Cardiac septum (tissue), 1 donor: ENCODE measurements at regions of chr1 and their contacts with region 1.

Region 1: DNA sequence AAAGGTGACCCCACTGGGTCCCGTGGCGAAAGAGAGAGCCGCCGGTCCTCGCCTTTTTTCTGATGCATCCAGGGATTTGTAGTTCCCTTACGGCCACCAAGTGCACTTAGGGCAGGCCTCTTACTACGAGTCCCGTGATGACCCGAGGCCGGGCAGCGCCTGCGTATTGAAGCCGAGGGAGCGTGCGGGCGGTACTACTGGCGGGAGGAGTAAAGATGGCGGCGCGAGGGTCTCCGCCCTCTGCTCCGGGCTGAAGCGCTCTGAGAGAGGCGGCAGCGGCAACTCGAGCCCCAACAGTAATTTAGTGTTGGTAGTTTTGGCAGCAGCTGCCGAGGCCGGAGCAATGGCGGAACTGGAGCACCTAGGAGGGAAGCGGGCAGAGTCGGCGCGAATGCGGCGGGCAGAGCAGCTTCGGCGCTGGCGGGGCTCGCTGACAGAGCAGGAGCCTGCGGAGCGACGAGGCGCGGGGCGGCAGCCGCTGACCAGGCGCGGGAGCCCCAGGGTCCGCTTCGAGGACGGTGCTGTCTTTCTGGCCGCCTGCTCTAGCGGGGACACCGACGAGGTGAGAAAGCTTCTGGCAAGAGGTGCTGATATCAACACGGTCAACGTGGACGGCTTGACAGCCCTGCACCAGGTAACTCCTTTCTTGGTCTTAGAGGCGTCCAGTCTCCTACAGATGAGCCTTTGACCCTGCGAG is at the start of gene PPP1R12B:
- DNase-seq: peak; percentile 99
- total RNA-seq, gene PPP1R12B: 428 TPM

Region 2: GRCh38 chr1:202405928-202406327 is 57.3 kb after region 1 on chr1:
- intact Hi-C with region 1: loop called (anchors 5 kb)
- DNase-seq: no peak

Region 3: GRCh38 chr1:202462342-202463076 is 113.9 kb after region 1 on chr1:
- intact Hi-C with region 1: loop called (anchors 2 kb)
- DNase-seq: no peak

Region 4: GRCh38 chr1:202599677-202600431 is 251.2 kb after region 1 on chr1:
- intact Hi-C with region 1: loop called (anchors 10 kb)
- DNase-seq: no peak

Region 5: GRCh38 chr1:202716654-202717053 is 368.0 kb after region 1 on chr1:
- intact Hi-C with region 1: loop called (anchors 5 kb)
- DNase-seq: no peak